PC-9 (cell line): ENCODE measurements at regions of chr21 and their contacts with region 1.

Region 1: DNA sequence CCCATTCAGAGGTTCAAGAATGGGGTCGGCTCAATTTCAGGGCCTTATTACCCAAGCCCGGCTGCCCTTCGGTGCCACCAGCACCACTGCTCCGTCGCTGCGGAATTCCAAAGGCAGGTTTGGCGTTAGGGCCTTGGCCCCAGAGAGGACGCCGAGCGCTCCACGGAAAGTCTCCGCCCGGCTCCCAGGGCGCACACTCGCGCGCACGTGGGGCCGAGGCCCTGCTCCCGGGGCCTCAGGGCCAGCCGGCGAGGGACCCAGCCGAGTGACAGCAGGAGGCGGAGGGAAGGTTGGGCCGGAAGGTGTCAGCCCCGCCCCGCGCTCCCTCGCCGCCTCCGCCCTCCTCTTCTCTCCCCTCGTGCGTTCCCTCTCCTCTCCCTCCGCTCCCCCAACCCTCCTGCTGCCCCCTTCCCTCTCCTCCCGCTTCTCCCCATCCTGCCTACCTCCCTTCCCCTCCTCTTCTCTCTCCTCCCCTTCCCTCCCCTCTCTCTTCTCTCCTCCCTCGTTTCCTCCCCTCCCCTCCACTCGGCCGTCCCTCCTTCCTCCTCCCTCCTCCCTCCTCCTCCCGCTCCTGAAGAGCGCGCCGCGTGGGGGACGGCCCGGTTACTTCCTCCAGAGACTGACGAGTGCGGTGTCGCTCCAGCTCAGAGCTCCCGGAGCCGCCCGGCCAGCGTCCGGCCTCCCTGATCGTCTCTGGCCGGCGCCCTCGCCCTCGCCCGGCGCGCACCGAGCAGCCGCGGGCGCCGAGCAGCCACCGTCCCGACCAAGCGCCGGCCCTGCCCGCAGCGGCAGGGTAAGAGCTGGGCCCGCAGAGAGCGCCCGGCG is at the start of gene ETS2:
- DNase-seq: peak; percentile 69 to 83
- H3K4me3 ChIP-seq: peak within 1 kb of the TSS; percentile 79
- H3K27ac ChIP-seq: peak within 1 kb of the TSS; percentile 95
- H3K4me1 ChIP-seq: peaks cover 33% of the 10 kb centered on the region
- H3K27me3 ChIP-seq: no peaks in the 10 kb centered on the region
- CTCF ChIP-seq: 0 out of 2 replicates have a peak, but pooled peaks have one; percentile 9
- total RNA-seq, gene ETS2: 20.4 and 25.2 TPM in 2 replicates

Region 2: DNA sequence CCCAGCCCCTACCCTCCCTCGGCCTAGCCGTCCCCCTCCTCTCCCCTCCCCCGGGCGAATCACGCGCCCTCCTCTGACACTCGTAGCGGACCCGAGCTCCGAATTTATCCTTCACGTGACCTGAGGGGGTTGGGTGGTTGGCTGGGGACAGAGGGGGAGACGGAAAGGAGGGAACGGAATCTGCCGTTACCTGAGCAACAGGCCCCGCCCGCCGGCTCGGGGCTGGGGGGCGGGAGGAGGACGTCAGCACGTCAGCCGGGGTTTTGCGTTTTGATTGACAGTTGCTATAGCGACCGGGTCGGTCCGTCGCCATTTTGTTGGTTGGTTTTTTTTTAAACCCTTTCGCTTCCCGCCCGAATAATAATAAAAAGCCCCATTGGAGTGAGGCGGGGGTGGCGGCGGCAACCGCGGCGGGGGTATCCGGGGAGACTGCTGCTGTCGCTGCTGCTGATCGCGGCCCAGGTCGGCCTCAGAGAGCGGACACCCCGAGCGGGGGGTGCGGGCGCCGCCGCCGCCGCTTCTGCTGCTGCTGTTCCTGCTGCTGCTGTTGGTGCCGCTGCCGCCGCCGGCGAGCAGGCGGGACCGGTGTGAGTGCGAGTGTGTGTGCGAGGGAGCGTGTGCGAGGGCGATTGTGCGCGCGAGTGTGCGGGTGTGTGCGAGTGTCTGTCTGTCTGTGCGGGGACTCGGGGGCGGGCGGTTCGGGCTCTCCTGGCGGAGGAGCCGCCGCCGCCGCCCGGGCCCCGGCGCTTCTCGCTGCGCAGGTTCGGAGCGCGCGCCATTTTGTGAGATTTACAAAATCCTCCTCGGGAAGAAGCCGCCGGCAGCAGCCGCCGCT is 1438.8 kb before region 1 on chr21 and contains the start of gene DYRK1A:
- CTCF ChIA-PET with region 1: no interaction called
- POLR2A ChIA-PET with region 1: interaction called, 11 read pairs
- intact Hi-C with region 1: no loop called
- DNase-seq: peak; percentile 91 to 95
- H3K4me3 ChIP-seq: peak within 1 kb of the TSS; percentile 78
- H3K27ac ChIP-seq: peak within 1 kb of the TSS; percentile 97
- H3K4me1 ChIP-seq: peaks cover 37% of the 10 kb centered on the region
- H3K27me3 ChIP-seq: no peaks in the 10 kb centered on the region
- CTCF ChIP-seq: no peak
- total RNA-seq, gene DYRK1A: 33.7 and 35.5 TPM in 2 replicates

Region 3: DNA sequence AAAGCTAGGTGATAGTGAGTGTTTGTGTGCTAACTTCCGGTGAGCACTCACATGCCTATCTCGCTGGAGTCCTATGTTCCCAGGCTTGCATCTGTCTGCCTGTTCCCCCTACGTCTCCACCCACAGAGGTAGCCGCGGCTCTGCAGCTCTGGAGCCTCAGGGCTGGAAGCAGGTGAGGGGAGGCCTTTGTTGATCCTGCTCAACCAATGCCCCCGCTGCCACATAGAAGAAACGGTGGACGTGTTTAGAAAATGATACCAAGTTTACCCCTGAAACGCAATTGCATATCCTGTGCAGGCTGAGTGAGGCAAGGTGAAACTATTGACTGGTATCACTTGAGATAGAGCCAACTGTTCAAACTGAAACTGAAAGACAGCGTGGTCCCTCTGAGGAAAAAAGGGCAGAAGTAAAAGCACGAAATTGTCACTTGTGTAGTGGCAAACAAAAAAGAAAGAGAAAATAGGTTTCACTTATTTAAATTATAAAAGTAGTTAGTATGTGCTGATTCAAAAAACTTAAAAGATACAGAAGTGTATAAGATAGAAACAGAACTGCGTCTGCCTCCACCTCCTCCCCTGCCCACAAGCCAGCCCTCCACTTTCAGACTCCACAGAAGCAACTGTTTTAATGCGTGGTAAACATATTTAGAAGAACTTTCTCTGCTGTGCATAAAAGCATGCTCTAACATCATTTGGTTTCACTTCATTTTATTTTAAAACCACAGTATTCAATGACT is 38.4 kb before region 1 on chr21:
- CTCF ChIA-PET with region 1: no interaction called
- POLR2A ChIA-PET with region 1: no interaction called
- intact Hi-C with region 1: loop called (anchors 1 kb)
- DNase-seq: peak; percentile 35 to 63
- H3K4me3 ChIP-seq: peak overlapping the region; percentile 38; the same call in 1 of the 2 replicates
- H3K27ac ChIP-seq: peak overlapping the region; percentile 65
- H3K4me1 ChIP-seq: no peaks in the 10 kb centered on the region
- H3K27me3 ChIP-seq: no peaks in the 10 kb centered on the region
- CTCF ChIP-seq: no peak

Region 4: GRCh38 chr21:38853421-38853919 is 47.9 kb after region 1 on chr21:
- CTCF ChIA-PET with region 1: interaction called, 5 read pairs
- POLR2A ChIA-PET with region 1: no interaction called
- intact Hi-C with region 1: loop called (anchors 5 kb)
- DNase-seq: peak; percentile 87 to 91
- H3K4me3 ChIP-seq: no peak overlapping the region
- H3K27ac ChIP-seq: peak overlapping the region; percentile 37
- H3K4me1 ChIP-seq: peaks cover 13% of the 10 kb centered on the region
- H3K27me3 ChIP-seq: no peaks in the 10 kb centered on the region
- CTCF ChIP-seq: no peak

Region 5: DNA sequence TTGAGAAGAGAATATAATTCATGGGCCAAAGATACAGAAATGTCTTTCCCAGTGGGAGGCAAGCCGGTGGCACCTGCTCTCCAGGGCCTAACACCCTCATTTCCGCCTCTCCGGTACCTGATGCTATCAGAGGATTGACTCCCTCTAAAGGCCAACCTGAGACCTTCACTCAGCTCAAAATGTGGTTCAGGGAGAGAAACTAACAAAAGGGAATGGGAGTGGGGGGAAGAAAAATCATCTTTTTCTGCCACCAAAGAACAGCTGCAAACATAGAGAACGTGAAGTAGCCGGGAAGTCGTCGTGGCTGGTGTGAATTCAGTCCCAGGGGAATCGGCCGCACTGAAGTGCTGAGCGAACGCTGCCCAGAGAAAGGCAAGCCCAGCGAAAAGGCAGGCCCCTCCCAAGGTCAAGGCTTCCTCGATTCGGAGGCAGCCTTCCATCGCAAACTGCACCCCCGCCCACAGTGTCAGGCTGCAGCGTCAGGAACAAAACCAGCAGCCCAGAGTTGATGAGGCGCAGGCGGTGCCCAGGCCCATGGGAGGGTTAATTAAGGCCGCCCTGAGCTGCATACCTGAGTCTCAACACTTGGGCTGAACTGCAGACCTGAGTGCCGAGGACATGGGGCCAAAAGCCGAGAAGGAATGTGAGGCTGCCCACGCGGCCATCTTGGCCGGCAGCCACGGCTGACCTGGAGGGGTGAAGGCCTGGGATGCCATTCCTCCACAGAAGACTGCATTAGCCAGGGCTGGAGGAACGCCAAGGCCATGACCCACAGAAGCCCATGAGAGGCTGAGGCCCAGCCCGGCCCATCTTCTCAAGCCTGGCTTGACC is 217.5 kb after region 1 on chr21:
- CTCF ChIA-PET with region 1: no interaction called
- POLR2A ChIA-PET with region 1: interaction called, 3 read pairs
- intact Hi-C with region 1: loop called (anchors 1 kb)
- DNase-seq: peak in 1 of 2 experiments; percentile 89
- H3K4me3 ChIP-seq: no peak overlapping the region
- H3K27ac ChIP-seq: no peak overlapping the region
- H3K4me1 ChIP-seq: peaks cover 22% of the 10 kb centered on the region
- H3K27me3 ChIP-seq: no peaks in the 10 kb centered on the region
- CTCF ChIP-seq: 0 out of 2 replicates have a peak, but pooled peaks have one; percentile 25

Region 6: DNA sequence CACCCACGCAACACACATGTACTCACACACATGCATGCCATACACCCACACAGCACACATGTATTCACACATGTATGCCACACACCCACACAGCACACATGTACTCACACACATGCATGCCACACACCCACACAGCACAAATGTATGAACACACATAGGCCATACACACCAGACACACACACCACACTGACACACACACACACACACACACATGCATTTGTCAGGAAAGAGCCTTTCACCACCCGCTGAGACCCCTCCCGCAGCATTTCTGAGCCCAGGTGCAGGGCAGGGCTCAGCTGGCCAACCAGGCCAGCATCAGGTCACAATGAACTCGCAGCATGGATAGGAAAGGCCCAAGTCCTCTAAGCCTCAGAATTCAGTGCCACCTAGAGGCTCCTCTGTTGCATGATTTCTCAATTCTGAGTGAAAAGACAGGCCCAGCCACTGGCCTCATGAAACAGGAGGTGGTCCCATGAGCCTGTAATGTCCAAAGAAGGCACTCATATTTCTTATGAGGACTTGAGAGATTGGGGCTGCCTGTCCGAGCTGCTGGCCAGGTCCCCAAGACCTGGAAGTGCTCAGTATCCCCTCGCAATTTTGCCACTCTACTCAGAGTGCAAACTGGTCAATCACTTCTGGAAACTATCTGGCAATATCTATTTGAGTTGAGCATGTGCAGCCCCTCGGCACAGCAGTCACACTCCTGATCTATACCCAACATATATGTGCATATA is 320.4 kb after region 1 on chr21:
- CTCF ChIA-PET with region 1: no interaction called
- POLR2A ChIA-PET with region 1: no interaction called
- intact Hi-C with region 1: loop called (anchors 1 kb)
- DNase-seq: peak; percentile 43 to 46
- H3K4me3 ChIP-seq: no peak overlapping the region
- H3K27ac ChIP-seq: no peak overlapping the region
- H3K4me1 ChIP-seq: no peaks in the 10 kb centered on the region
- H3K27me3 ChIP-seq: no peaks in the 10 kb centered on the region
- CTCF ChIP-seq: peak; percentile 63; the same call in 1 of the 2 replicates